IMR-90 (cell line): ENCODE measurements at regions of chr3 and their contacts with region 1.

Region 1: DNA sequence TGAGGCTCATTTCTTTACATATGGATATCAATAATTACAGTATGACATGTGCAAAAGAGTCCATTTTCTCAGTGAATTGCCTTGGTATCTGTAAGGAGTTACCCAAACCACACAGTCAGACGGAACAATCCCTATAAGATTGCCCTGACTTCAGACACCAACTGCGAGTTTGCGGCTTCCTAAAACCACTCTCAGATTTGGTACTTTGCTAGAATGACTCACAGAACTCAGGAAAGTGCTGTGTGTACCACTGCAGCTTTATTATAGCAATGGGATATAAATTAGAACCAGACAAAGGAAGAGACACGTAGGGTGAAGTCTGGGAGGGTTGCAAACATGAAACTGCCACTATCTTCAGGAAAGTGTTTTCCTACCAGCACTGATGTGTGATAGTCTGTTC is 45.8 kb upstream of the ATP13A3 start:
- DNase-seq: no peak
- ATAC-seq: no peak
- H3K4me3 ChIP-seq: no peak overlapping the region
- H3K27ac ChIP-seq: no peak overlapping the region
- H3K4me1 ChIP-seq: peaks cover 8% of the 10 kb centered on the region
- H3K27me3 ChIP-seq: no peaks in the 10 kb centered on the region
- CTCF ChIP-seq: no peak
- POLR2A ChIP-seq: no peak
- RAD21 ChIP-seq: no peak

Region 2: GRCh38 chr3:194486540-194487288 is 45.9 kb before region 1 on chr3 and contains the start of gene ATP13A3:
- CTCF ChIA-PET with region 1: no interaction called
- POLR2A ChIA-PET with region 1: no interaction called
- dilution Hi-C with region 1: no loop called
- in situ Hi-C with region 1: no loop called
- intact Hi-C with region 1: loop called (anchors 5 kb)
- DNase-seq: peak; percentile 88
- ATAC-seq: peak; percentile 81
- H3K4me3 ChIP-seq: peak within 1 kb of the TSS; percentile 82
- H3K27ac ChIP-seq: peak within 1 kb of the TSS; percentile 93
- H3K4me1 ChIP-seq: peaks cover 21% of the 10 kb centered on the region
- H3K27me3 ChIP-seq: no peaks in the 10 kb centered on the region
- CTCF ChIP-seq: no peak
- POLR2A ChIP-seq: peak; percentile 77
- RAD21 ChIP-seq: no peak
- total RNA-seq, gene ATP13A3: 154 and 284 TPM in 2 replicates

Region 3: GRCh38 chr3:194503081-194503531 is 29.5 kb before region 1 on chr3:
- CTCF ChIA-PET with region 1: no interaction called
- POLR2A ChIA-PET with region 1: no interaction called
- dilution Hi-C with region 1: no loop called
- in situ Hi-C with region 1: no loop called
- intact Hi-C with region 1: loop called (anchors 1 kb)
- DNase-seq: peak; percentile 87
- ATAC-seq: peak; percentile 83
- H3K4me3 ChIP-seq: no peak overlapping the region
- H3K27ac ChIP-seq: peak overlapping the region; percentile 95; the same call in 1 of the 2 replicates
- H3K4me1 ChIP-seq: peaks cover 13% of the 10 kb centered on the region
- H3K27me3 ChIP-seq: no peaks in the 10 kb centered on the region
- CTCF ChIP-seq: no peak
- POLR2A ChIP-seq: no peak
- RAD21 ChIP-seq: no peak

Region 4: DNA sequence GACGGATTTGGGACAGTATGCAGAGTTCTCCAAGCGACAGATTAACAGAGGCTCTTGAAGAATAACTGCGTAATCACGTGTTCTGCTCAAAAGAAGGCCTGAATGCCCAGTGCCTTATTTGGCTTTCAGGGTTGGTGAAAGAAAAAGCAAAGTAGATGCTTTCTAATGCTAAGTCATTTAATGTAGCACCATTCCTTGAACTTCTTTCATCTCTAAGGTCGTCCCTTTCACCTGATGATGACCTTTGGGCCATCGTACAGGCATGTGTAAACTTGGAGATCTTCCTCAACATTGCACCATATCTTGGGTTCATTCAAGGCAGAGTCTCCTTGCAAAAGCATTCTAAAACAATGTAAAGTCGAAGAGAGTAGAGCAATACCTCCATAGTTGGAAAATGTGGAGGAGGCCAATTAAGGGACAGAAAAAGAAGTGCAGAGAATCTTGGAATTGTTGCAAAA is 51.8 kb after region 1 on chr3:
- CTCF ChIA-PET with region 1: no interaction called
- POLR2A ChIA-PET with region 1: no interaction called
- dilution Hi-C with region 1: no loop called
- in situ Hi-C with region 1: no loop called
- intact Hi-C with region 1: no loop called
- DNase-seq: no peak
- ATAC-seq: no peak
- H3K4me3 ChIP-seq: peak overlapping the region; percentile 91
- H3K27ac ChIP-seq: peak overlapping the region; percentile 99
- H3K4me1 ChIP-seq: no peaks in the 10 kb centered on the region; the same call in 1 of the 2 replicates
- H3K27me3 ChIP-seq: no peaks in the 10 kb centered on the region
- CTCF ChIP-seq: no peak
- POLR2A ChIP-seq: no peak
- RAD21 ChIP-seq: no peak

Region 5: DNA sequence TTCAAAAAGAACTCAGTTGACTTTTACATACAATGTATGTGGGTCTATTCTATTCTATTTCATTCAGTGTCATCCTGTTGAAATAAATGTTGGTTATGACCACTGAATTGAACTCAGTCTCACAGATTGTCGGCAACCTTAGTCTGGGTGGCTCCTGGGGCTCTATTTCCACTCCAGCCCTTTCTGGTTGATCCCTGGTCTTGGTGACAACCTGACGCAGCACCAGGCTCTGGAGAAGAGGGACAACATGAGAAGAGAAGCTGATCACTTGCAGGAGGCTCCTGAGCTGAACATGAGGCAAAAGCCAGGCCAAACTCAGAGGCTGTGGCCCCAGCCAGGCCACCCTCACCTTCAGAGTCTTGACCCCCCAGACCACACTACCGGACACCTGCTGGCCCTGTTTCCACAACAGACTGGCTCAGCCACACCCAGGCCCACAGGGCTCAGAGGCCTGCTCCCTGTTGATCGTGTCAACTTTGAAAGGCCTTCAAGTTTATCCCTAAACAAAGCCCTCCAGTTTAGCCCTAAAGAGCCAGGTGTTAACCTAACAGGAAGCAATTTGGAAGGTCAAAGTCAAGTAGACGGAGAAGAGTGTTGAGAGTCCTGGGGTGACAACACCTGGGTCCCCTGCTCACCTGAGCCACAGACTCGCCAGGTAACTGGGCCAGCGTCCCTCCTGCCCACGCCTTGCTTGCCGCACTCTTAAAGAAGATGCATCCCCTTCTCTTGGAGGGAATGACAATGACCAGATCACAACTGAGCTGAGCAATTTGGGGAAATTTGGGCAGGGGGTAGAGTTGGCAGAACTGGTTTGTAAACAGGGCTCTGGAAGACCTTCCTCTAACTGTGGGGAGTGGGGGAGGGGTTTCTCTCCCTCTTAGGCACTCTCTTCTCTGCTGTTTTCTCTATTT is 1172.7 kb after region 1 on chr3:
- CTCF ChIA-PET with region 1: no interaction called
- POLR2A ChIA-PET with region 1: interaction called, 10 read pairs
- dilution Hi-C with region 1: no loop called
- in situ Hi-C with region 1: no loop called
- intact Hi-C with region 1: no loop called
- DNase-seq: no peak
- ATAC-seq: no peak
- H3K4me3 ChIP-seq: no peak overlapping the region
- H3K27ac ChIP-seq: no peak overlapping the region
- H3K4me1 ChIP-seq: peaks cover 2% of the 10 kb centered on the region; the same call in 1 of the 2 replicates
- H3K27me3 ChIP-seq: peaks cover 9% of the 10 kb centered on the region
- CTCF ChIP-seq: no peak
- POLR2A ChIP-seq: no peak
- RAD21 ChIP-seq: no peak